Heart left ventricle (tissue), 16 donors: ENCODE measurements at regions of chr15 and their contacts with region 1.

Region 1: GRCh38 chr15:89750560-89751542 is at the start of gene MESP1:
- DNase-seq: peak; percentile 90 to 96 (median 93)
- ATAC-seq: peak; percentile 89 to 97 (median 94)
- H3K4me3 ChIP-seq: peak within 1 kb of the TSS; percentile 57 to 84 (median 74)
- H3K27ac ChIP-seq: peak within 1 kb of the TSS in 7 of 12 donors; percentile 27 to 81 (median 57)
- H3K4me1 ChIP-seq: peaks cover 0 to 18% (median 12%) of the 10 kb centered on the region in 12 donors
- H3K27me3 ChIP-seq: peaks cover 0 to 22% (median 4%) of the 10 kb centered on the region in 9 donors
- CTCF ChIP-seq: peak; percentile 40 to 93 (median 68)
- POLR2A ChIP-seq: peak in 1 of 2 donors; percentile 52
- total RNA-seq, gene MESP1: 1.3 to 6.9 (median 5.1) TPM

Region 2: DNA sequence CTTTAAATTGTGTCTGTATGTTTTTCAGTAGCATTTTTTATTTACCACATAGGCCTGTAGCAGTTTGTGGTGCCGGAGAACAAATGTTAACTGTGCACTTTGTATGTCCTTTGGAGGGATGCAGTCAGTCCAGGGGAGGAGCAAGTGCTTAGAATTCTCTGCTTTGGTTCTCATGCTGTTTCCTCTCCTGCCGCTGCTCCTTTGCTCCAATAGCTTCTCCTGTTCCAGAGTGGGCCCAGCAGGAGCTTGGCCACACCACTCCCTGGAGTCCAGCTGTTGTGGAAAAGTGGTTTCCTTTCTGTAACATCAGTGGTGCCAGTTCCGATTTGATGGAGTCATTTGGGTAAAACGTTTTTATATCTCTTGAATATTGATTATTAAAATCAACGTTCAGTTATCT is 159.0 kb before region 1 on chr15:
- intact Hi-C with region 1: no loop called
- DNase-seq: no peak
- ATAC-seq: no peak
- H3K4me3 ChIP-seq: no peak overlapping the region
- H3K27ac ChIP-seq: no peak overlapping the region
- H3K4me1 ChIP-seq: no peaks in the 10 kb centered on the region
- H3K27me3 ChIP-seq: no peaks in the 10 kb centered on the region
- CTCF ChIP-seq: no peak
- POLR2A ChIP-seq: no peak

Region 3: DNA sequence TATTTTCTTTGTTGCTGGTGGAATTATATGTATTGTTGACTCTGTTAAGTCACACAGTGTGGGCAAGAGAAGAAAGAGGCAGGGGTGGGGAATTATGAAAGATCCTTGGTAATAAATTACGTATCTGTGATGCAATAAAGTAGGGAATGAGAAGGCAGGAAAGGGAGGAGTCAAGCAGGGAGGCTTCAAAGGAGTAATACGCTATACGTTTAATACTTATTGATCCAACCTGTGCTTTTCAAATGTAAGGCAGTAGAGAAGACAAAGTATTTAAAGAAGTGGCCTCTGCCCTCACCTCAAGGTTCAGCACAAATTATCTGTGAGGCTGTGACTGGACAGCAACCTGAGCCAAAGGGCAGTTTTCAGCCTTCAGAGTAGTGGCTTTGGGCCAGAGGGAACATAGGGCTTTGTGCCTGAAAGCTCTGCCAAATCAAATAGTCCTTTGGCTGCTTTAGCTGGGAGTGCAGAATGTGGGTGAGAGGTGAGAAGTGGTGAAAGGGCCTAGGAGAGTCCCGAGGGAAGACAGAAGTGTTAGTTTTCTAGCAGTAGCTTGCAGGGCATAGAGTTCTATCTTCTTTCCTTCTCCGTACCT is 70.5 kb before region 1 on chr15:
- intact Hi-C with region 1: no loop called
- DNase-seq: peak in 4 of 5 donors; percentile 52 to 78 (median 68)
- ATAC-seq: peak; percentile 91 to 96 (median 95)
- H3K4me3 ChIP-seq: no peak overlapping the region
- H3K27ac ChIP-seq: peak overlapping the region; percentile 2 to 90 (median 68)
- H3K4me1 ChIP-seq: peaks cover 0 to 24% (median 12%) of the 10 kb centered on the region in 12 donors
- H3K27me3 ChIP-seq: no peaks in the 10 kb centered on the region
- CTCF ChIP-seq: no peak
- POLR2A ChIP-seq: no peak

Region 4: GRCh38 chr15:89982315-89983055 is 231.6 kb after region 1 on chr15:
- intact Hi-C with region 1: loop called in 1 of 10 experiments (anchors 10 kb)
- DNase-seq: no peak
- ATAC-seq: no peak
- H3K4me3 ChIP-seq: no peak overlapping the region
- H3K27ac ChIP-seq: no peak overlapping the region
- H3K4me1 ChIP-seq: no peaks in the 10 kb centered on the region
- H3K27me3 ChIP-seq: peaks cover 0 to 3% (median 0%) of the 10 kb centered on the region in 9 donors
- CTCF ChIP-seq: no peak
- POLR2A ChIP-seq: no peak